CD4-positive, alpha-beta memory T cell (primary cell): ENCODE measurements at regions of chr15 and their contacts with region 1.

Region 1: DNA sequence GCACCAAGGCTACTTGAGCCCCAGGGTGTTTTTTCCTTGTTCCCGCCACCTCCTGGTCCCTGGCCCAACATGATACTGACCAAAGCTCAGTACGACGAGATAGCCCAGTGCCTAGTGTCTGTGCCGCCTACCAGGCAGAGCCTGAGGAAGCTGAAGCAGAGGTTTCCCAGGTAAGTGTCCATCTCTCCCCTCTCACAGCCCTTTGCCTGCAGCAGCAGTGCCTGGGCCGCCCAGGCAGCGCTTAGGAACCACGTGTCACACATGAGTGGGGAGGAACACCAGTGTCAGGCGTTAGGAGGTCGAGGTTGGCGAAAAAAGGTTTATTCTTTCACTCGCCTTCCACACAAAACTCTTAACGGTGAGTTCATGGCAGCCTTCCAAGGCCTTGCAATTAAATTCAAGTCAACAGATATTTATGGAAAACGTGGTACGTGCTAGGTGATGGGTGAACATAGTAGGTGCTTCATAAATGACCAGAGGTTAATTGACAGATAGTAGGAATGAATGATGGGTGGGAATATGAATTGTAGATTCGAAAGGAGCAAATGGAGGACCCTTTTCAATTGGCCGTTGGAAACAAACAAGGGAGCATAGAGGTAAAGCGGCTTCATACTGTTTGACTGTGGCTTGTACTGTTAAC is 486 bp downstream of the CDIN1 start:
- DNase-seq: peak in 1 of 5 donors; percentile 40
- H3K4me3 ChIP-seq: peak overlapping the region; percentile 86 to 96
- H3K4me3 Mint-ChIP-seq: peak overlapping the region; percentile 89 to 94 (median 93)
- H3K27ac ChIP-seq: peak overlapping the region; percentile 78
- H3K27ac Mint-ChIP-seq: peak overlapping the region in 6 of 7 donors; percentile 91 to 98 (median 95)
- H3K4me1 ChIP-seq: peaks cover 10% of the 10 kb centered on the region
- H3K4me1 Mint-ChIP-seq: peaks cover 14 to 27% (median 21%) of the 10 kb centered on the region in 4 donors
- H3K27me3 ChIP-seq: no peaks in the 10 kb centered on the region
- H3K27me3 Mint-ChIP-seq: no peaks in the 10 kb centered on the region

Region 2: GRCh38 chr15:35545824-35546510 is 1033.9 kb before region 1 on chr15 and contains the start of gene DPH6:
- CTCF ChIA-PET with region 1: no interaction called
- POLR2A ChIA-PET with region 1: interaction called, 5 read pairs
- intact Hi-C with region 1: loop called (anchors 1 kb)
- DNase-seq: peak; percentile 88 to 92 (median 89)
- H3K4me3 ChIP-seq: peak within 1 kb of the TSS; percentile 51 to 61
- H3K4me3 Mint-ChIP-seq: peak within 1 kb of the TSS; percentile 94 to 100 (median 98)
- H3K27ac ChIP-seq: peak within 1 kb of the TSS; percentile 87
- H3K27ac Mint-ChIP-seq: peak within 1 kb of the TSS; percentile 97 to 100 (median 98)
- H3K4me1 ChIP-seq: peaks cover 18% of the 10 kb centered on the region
- H3K4me1 Mint-ChIP-seq: peaks cover 12 to 31% (median 16%) of the 10 kb centered on the region in 4 donors
- H3K27me3 ChIP-seq: no peaks in the 10 kb centered on the region
- H3K27me3 Mint-ChIP-seq: no peaks in the 10 kb centered on the region
- total RNA-seq, gene DPH6: 11.5 to 14.5 TPM

Region 3: GRCh38 chr15:36323615-36324014 is 256.3 kb before region 1 on chr15:
- CTCF ChIA-PET with region 1: no interaction called
- POLR2A ChIA-PET with region 1: no interaction called
- intact Hi-C with region 1: no loop called
- DNase-seq: no peak
- H3K4me3 ChIP-seq: no peak overlapping the region
- H3K4me3 Mint-ChIP-seq: no peak overlapping the region
- H3K27ac ChIP-seq: no peak overlapping the region
- H3K27ac Mint-ChIP-seq: no peak overlapping the region
- H3K4me1 ChIP-seq: no peaks in the 10 kb centered on the region
- H3K4me1 Mint-ChIP-seq: no peaks in the 10 kb centered on the region
- H3K27me3 ChIP-seq: no peaks in the 10 kb centered on the region
- H3K27me3 Mint-ChIP-seq: no peaks in the 10 kb centered on the region